GM13976 (cell line): ENCODE measurements at regions of chr9 and their contacts with region 1.

Region 1: GRCh38 chr9:91433180-91433579 is 9.5 kb upstream of the NFIL3 start:
- DNase-seq: peak; percentile 50
- CTCF ChIP-seq: peak; percentile 40

Region 2: GRCh38 chr9:91676046-91676445 is 242.9 kb after region 1 on chr9:
- in situ Hi-C with region 1: loop called (anchors 10 kb)
- DNase-seq: no peak
- CTCF ChIP-seq: peak; percentile 52

Region 3: GRCh38 chr9:91727316-91727861 is 294.2 kb after region 1 on chr9:
- in situ Hi-C with region 1: loop called (anchors 10 kb)
- DNase-seq: peak; percentile 81
- CTCF ChIP-seq: peak; percentile 68

Region 4: GRCh38 chr9:91758491-91758981 is 325.4 kb after region 1 on chr9:
- in situ Hi-C with region 1: no loop called
- DNase-seq: peak; percentile 70
- CTCF ChIP-seq: peak; percentile 55